Natural killer cell (primary cell): ENCODE measurements at regions of chr4 and their contacts with region 1.

Region 1: DNA sequence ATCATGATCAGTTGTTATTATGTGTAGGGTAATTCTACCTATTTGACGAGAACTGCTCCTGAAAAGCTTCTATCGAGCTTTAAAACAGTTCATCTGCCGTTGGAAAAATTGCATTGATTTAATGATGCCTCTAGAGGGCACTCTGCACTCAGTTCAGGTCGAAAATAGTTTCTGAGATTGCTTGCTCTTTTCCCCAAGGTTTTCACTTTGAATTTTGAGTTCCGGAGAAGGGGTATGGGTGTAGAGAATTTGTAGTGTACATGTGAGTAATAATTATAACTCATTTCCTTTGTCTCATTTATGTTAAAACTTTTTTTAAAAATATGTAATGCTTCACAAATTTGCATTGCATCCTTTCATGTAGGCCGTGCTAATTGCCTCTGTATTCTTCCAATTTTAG is 28.4 kb upstream of the TNIP3 start:
- DNase-seq: peak in 1 of 2 donors; percentile 77
- ATAC-seq: peak in 1 of 3 donors; percentile 39
- H3K4me3 ChIP-seq: no peak overlapping the region
- H3K4me3 Mint-ChIP-seq: peak overlapping the region; percentile 13
- H3K27ac ChIP-seq: no peak overlapping the region
- H3K27ac Mint-ChIP-seq: no peak overlapping the region
- H3K4me1 ChIP-seq: peaks cover 14% of the 10 kb centered on the region
- H3K4me1 Mint-ChIP-seq: peaks cover 32 to 45% of the 10 kb centered on the region in 2 donors
- H3K27me3 ChIP-seq: no peaks in the 10 kb centered on the region
- H3K27me3 Mint-ChIP-seq: no peaks in the 10 kb centered on the region
- CTCF ChIP-seq: peak; percentile 94

Region 2: GRCh38 chr4:119955256-119955655 is 1237.2 kb before region 1 on chr4:
- intact Hi-C with region 1: no loop called
- DNase-seq: no peak
- ATAC-seq: no peak
- H3K4me3 ChIP-seq: no peak overlapping the region
- H3K4me3 Mint-ChIP-seq: no peak overlapping the region
- H3K27ac ChIP-seq: no peak overlapping the region
- H3K27ac Mint-ChIP-seq: no peak overlapping the region
- H3K4me1 ChIP-seq: no peaks in the 10 kb centered on the region
- H3K4me1 Mint-ChIP-seq: no peaks in the 10 kb centered on the region
- H3K27me3 ChIP-seq: no peaks in the 10 kb centered on the region
- H3K27me3 Mint-ChIP-seq: no peaks in the 10 kb centered on the region
- CTCF ChIP-seq: no peak

Region 3: GRCh38 chr4:120071192-120071795 is 1121.2 kb before region 1 on chr4:
- intact Hi-C with region 1: loop called (anchors 10 kb)
- DNase-seq: peak; percentile 29 to 86
- ATAC-seq: no peak
- H3K4me3 ChIP-seq: no peak overlapping the region
- H3K4me3 Mint-ChIP-seq: no peak overlapping the region
- H3K27ac ChIP-seq: no peak overlapping the region
- H3K27ac Mint-ChIP-seq: no peak overlapping the region
- H3K4me1 ChIP-seq: peaks cover 8% of the 10 kb centered on the region
- H3K4me1 Mint-ChIP-seq: peaks cover 20% of the 10 kb centered on the region in 2 donors
- H3K27me3 ChIP-seq: no peaks in the 10 kb centered on the region
- H3K27me3 Mint-ChIP-seq: no peaks in the 10 kb centered on the region
- CTCF ChIP-seq: peak; percentile 73

Region 4: DNA sequence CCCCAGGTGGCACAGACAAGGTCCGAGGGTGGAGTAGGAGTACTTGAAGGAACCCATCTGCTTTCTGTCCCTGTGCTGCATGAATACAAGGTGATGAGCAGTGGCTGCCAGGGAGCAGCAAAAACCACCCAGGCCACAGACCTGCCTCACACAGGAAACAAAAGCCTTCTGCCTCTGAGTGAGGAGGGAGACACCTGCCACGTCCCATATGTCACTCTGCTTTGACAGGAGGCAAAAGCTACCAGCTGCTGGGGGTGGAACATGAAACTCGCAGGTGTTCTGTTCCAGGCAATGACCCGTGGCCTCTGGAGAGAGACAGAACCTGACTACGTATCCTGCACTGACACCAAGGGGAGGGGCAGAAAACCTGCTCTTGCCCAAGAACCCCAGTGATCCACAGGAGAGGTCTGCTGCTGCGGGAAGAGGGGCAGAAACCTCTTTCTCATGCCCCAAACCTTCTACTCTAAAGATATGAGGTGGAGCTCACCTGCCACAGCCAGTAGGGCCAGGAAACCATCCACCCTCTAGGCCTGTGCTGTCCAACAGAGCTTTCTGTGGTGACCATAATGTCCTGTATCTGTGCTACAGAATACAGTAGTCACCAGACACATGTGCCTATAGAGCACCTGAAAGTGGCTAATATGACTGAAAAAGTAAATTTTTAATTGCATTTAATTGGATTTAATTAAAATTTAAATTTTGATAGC is 442.9 kb before region 1 on chr4:
- intact Hi-C with region 1: no loop called
- DNase-seq: peak in 1 of 2 donors; percentile 10
- ATAC-seq: no peak
- H3K4me3 ChIP-seq: no peak overlapping the region
- H3K4me3 Mint-ChIP-seq: no peak overlapping the region
- H3K27ac ChIP-seq: no peak overlapping the region
- H3K27ac Mint-ChIP-seq: no peak overlapping the region
- H3K4me1 ChIP-seq: peaks cover 6% of the 10 kb centered on the region
- H3K4me1 Mint-ChIP-seq: no peaks in the 10 kb centered on the region
- H3K27me3 ChIP-seq: no peaks in the 10 kb centered on the region
- H3K27me3 Mint-ChIP-seq: no peaks in the 10 kb centered on the region
- CTCF ChIP-seq: no peak

Region 5: GRCh38 chr4:121252224-121252806 is 59.8 kb after region 1 on chr4:
- intact Hi-C with region 1: loop called (anchors 1 kb)
- DNase-seq: peak; percentile 38 to 83
- ATAC-seq: peak in 1 of 3 donors; percentile 21
- H3K4me3 ChIP-seq: no peak overlapping the region
- H3K4me3 Mint-ChIP-seq: no peak overlapping the region
- H3K27ac ChIP-seq: no peak overlapping the region
- H3K27ac Mint-ChIP-seq: peak overlapping the region; percentile 96 to 98
- H3K4me1 ChIP-seq: peaks cover 33% of the 10 kb centered on the region
- H3K4me1 Mint-ChIP-seq: peaks cover 45 to 50% of the 10 kb centered on the region in 2 donors
- H3K27me3 ChIP-seq: no peaks in the 10 kb centered on the region
- H3K27me3 Mint-ChIP-seq: peaks cover 0 to 2% of the 10 kb centered on the region in 2 donors
- CTCF ChIP-seq: peak; percentile 84

Region 6: DNA sequence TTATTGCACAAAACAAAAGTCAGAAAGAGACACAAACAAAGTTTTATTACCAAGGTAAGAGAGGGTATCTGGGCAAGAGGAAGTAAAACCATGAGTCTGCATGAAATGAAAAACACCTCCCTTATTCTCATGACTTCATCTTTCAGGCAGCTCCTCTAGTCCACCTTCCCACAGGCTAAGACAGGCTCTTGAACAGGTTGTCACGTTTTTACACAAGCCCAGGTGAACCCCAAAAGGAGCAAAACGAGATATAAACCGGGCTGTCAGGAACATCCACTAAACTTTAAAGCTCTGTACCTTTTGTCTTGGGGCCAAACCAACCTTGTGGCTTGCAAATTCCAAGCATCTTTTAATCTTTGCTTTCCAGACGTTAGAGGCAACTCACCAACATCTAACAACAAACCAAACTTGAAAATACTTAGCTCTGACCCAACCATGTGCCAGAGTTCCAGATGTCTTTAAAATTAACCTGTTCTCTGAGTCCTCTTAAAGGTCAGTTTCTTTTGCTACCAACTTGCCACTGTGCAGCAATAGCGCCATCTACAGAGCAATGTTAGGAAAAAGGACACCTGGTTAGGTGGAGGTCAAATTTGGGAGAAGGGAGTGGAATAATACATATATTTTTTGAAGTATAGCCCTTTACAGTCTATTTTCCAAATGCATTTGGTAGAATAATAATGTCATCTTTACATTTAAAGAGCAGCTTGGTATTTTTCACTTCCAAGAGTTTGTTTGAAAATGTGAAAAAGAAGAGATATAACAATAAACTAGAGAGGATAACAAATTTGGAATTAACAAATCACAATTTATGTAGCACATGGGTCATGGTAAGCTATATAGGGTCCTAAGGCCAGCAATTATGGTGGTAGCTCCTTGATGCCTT is 115.2 kb after region 1 on chr4:
- intact Hi-C with region 1: loop called (anchors 1 kb)
- DNase-seq: peak; percentile 24 to 82
- ATAC-seq: peak; percentile 63 to 74 (median 68)
- H3K4me3 ChIP-seq: no peak overlapping the region
- H3K4me3 Mint-ChIP-seq: no peak overlapping the region
- H3K27ac ChIP-seq: no peak overlapping the region
- H3K27ac Mint-ChIP-seq: no peak overlapping the region
- H3K4me1 ChIP-seq: no peaks in the 10 kb centered on the region
- H3K4me1 Mint-ChIP-seq: peaks cover 0 to 10% of the 10 kb centered on the region in 2 donors
- H3K27me3 ChIP-seq: no peaks in the 10 kb centered on the region
- H3K27me3 Mint-ChIP-seq: peaks cover under 1 to 15% of the 10 kb centered on the region in 2 donors
- CTCF ChIP-seq: peak; percentile 88